Caco-2 (cell line): ENCODE measurements at regions of chr7 and their contacts with region 1.

Region 1: DNA sequence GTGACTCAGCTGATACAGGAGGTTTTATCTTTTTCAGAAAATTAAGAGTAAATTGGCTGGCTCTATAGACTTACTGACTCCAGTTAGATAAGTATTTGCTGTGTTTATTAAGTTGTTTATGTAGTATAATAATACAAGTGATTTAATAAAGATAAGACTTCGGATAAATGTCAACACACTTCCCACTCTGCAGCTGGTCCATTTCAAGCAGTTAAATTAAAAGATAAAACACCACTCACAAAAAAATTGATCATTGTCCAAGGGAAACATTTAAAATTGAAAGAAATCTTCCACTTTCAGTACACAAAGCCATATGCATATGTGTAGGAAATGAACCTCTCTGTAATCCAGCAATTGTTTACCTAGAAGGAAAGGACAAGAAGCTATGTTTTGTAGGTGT is 106.1 kb upstream of the SP8 start:
- DNase-seq: no peak
- H3K4me3 ChIP-seq: no peak overlapping the region
- H3K4me3 Mint-ChIP-seq: no peak overlapping the region
- H3K27ac Mint-ChIP-seq: no peak overlapping the region
- H3K4me1 ChIP-seq: no peaks in the 10 kb centered on the region
- H3K4me1 Mint-ChIP-seq: no peaks in the 10 kb centered on the region
- H3K27me3 ChIP-seq: no peaks in the 10 kb centered on the region
- H3K27me3 Mint-ChIP-seq: no peaks in the 10 kb centered on the region
- CTCF ChIP-seq: no peak

Region 2: GRCh38 chr7:20858951-20859350 is 33.8 kb before region 1 on chr7:
- CTCF ChIA-PET with region 1: no interaction called
- POLR2A ChIA-PET with region 1: interaction called, 11 read pairs
- intact Hi-C with region 1: no loop called
- DNase-seq: no peak
- H3K4me3 ChIP-seq: no peak overlapping the region
- H3K4me3 Mint-ChIP-seq: no peak overlapping the region
- H3K27ac Mint-ChIP-seq: no peak overlapping the region
- H3K4me1 ChIP-seq: no peaks in the 10 kb centered on the region
- H3K4me1 Mint-ChIP-seq: no peaks in the 10 kb centered on the region
- H3K27me3 ChIP-seq: no peaks in the 10 kb centered on the region
- H3K27me3 Mint-ChIP-seq: peaks cover 4% of the 10 kb centered on the region
- CTCF ChIP-seq: no peak